HCT116 (cell line): ENCODE measurements at regions of chr2 and their contacts with region 1.

Region 1: GRCh38 chr2:100610381-100610831 is 47.6 kb downstream of the PDCL3 start:
- DNase-seq: peak; percentile 38
- ATAC-seq: peak; percentile 88
- H3K4me3 ChIP-seq: no peak overlapping the region
- H3K27ac ChIP-seq: no peak overlapping the region
- H3K4me1 ChIP-seq: peaks cover 0 to 5% of the 10 kb centered on the region in 2 experiments; a peak in 1 of 4 replicates
- H3K27me3 ChIP-seq: 0 out of 2 replicates have a peak, but pooled peaks cover under 1% of the 10 kb centered on the region
- CTCF ChIP-seq: peak; percentile 66 to 77 (median 69); a peak in 5 of 6 replicates
- POLR2A ChIP-seq: no peak
- RAD21 ChIP-seq: peak; percentile 92

Region 2: GRCh38 chr2:99096728-99097127 is 1513.7 kb before region 1 on chr2:
- CTCF ChIA-PET with region 1: no interaction called
- POLR2A ChIA-PET with region 1: no interaction called
- RAD21 ChIA-PET with region 1: no interaction called
- intact Hi-C with region 1: no loop called
- DNase-seq: no peak
- ATAC-seq: no peak
- H3K4me3 ChIP-seq: no peak overlapping the region
- H3K27ac ChIP-seq: no peak overlapping the region
- H3K4me1 ChIP-seq: no peaks in the 10 kb centered on the region
- H3K27me3 ChIP-seq: no peaks in the 10 kb centered on the region
- CTCF ChIP-seq: no peak
- POLR2A ChIP-seq: no peak
- RAD21 ChIP-seq: no peak

Region 3: GRCh38 chr2:100730346-100730745 is 119.9 kb after region 1 on chr2:
- CTCF ChIA-PET with region 1: interaction called, 6 read pairs
- POLR2A ChIA-PET with region 1: interaction called, 3 read pairs
- RAD21 ChIA-PET with region 1: no interaction called
- intact Hi-C with region 1: loop called (anchors 5 kb)
- DNase-seq: peak; percentile 62
- ATAC-seq: peak; percentile 93
- H3K4me3 ChIP-seq: no peak overlapping the region
- H3K27ac ChIP-seq: no peak overlapping the region
- H3K4me1 ChIP-seq: peaks cover 6 to 10% of the 10 kb centered on the region in 2 experiments; a peak in 3 of 4 replicates
- H3K27me3 ChIP-seq: no peaks in the 10 kb centered on the region
- CTCF ChIP-seq: peak; percentile 76 to 83 (median 77)
- POLR2A ChIP-seq: no peak
- RAD21 ChIP-seq: peak; percentile 92

Region 4: DNA sequence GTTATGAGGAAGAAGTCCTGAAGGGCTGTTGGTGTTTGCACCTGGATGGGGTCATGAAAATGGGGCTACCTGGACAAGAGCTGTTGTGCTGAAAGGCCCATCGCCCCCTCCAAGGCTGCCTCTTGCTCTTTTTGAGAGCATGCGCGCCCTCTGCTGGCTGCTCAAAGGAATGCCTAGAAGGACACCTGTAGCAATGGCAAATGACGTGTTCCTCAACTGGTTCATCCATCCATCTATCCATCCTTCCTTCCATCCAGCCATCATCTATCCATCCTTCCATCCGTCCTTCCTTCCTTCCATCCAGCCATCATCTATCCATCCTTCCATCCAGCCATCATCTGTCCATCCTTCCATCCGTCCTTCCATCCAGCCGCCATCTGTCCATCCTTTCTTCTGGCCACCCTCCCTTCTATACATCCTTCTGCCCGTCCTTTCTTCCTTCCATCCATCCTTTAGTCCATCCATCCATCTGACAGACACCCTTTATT is 374.5 kb after region 1 on chr2:
- CTCF ChIA-PET with region 1: interaction called, 13 read pairs
- POLR2A ChIA-PET with region 1: no interaction called
- RAD21 ChIA-PET with region 1: interaction called in 1 of 2 experiments, 4 read pairs
- intact Hi-C with region 1: loop called (anchors 1 kb)
- DNase-seq: peak; percentile 64
- ATAC-seq: peak; percentile 86
- H3K4me3 ChIP-seq: no peak overlapping the region
- H3K27ac ChIP-seq: no peak overlapping the region
- H3K4me1 ChIP-seq: peaks cover 7 to 9% of the 10 kb centered on the region in 2 experiments
- H3K27me3 ChIP-seq: no peaks in the 10 kb centered on the region
- CTCF ChIP-seq: peak; percentile 83 to 87 (median 85)
- POLR2A ChIP-seq: no peak
- RAD21 ChIP-seq: peak; percentile 92

Region 5: GRCh38 chr2:101151141-101151858 is 540.9 kb after region 1 on chr2 and contains the start of gene TBC1D8:
- CTCF ChIA-PET with region 1: interaction called, 7 read pairs
- POLR2A ChIA-PET with region 1: no interaction called
- RAD21 ChIA-PET with region 1: no interaction called
- intact Hi-C with region 1: loop called (anchors 2 kb)
- DNase-seq: peak; percentile 49
- ATAC-seq: peak; percentile 91
- H3K4me3 ChIP-seq: peak within 1 kb of the TSS; percentile 72 to 80
- H3K27ac ChIP-seq: peak within 1 kb of the TSS; percentile 81; the same call in 1 of the 2 replicates
- H3K4me1 ChIP-seq: peaks cover 23 to 57% of the 10 kb centered on the region in 2 experiments
- H3K27me3 ChIP-seq: no peaks in the 10 kb centered on the region
- CTCF ChIP-seq: no peak
- POLR2A ChIP-seq: peak; percentile 81
- RAD21 ChIP-seq: 0 out of 2 replicates have a peak, but pooled peaks have one; percentile 3
- total RNA-seq, gene TBC1D8: 44.0 TPM

Region 6: DNA sequence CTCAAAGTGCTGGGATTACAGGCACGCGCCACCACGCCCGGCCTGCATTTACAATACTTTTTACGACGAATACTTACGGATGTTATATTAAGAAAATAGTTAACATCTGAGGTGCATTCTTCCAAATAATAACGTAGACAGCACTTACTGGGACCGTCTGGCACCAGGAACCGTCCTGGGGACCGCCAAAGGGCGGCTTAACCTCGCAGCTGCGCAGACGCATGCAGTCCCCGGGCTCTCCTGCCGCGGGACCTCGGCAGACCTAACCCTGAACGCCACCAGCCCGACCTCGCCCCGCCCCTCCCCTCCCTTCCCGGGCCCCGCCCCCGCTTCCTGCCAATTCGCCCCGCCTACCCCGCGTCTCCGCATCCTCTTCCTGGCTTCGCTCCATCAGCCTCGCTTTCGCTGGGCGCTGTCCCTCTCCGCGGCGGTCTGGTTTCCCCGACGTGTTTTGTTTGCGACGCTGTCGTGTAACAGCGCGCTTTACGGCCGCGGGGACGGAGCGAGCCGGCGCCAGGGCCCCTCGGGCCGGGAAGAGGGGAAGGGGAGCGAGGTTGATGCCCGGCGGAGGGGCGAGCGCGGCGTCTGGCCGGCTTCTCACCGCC is 642.1 kb after region 1 on chr2 and contains the start of gene CNOT11:
- CTCF ChIA-PET with region 1: no interaction called
- POLR2A ChIA-PET with region 1: no interaction called
- RAD21 ChIA-PET with region 1: no interaction called
- intact Hi-C with region 1: loop called (anchors 5 kb)
- DNase-seq: peak; percentile 97
- ATAC-seq: peak; percentile 90
- H3K4me3 ChIP-seq: peak within 1 kb of the TSS; percentile 84 to 91
- H3K27ac ChIP-seq: peak within 1 kb of the TSS; percentile 90
- H3K4me1 ChIP-seq: peaks cover 21 to 53% of the 10 kb centered on the region in 2 experiments
- H3K27me3 ChIP-seq: no peaks in the 10 kb centered on the region
- CTCF ChIP-seq: no peak
- POLR2A ChIP-seq: peak; percentile 89
- RAD21 ChIP-seq: no peak
- total RNA-seq, gene CNOT11: 57.8 TPM